ENCODE measurements at regions of chr17 and their contacts with region 1.

Region 1: GRCh38 chr17:32783602-32784001 is 93.3 kb downstream of the MYO1D start:
- DNase-seq: no peak
- H3K4me3 ChIP-seq: no peak overlapping the region
- H3K27ac ChIP-seq: no peak overlapping the region
- H3K4me1 ChIP-seq: no peaks in the 10 kb centered on the region
- H3K27me3 ChIP-seq: no peaks in the 10 kb centered on the region
- CTCF ChIP-seq: peak; percentile 45 to 84 (median 72)
- POLR2A ChIP-seq: no peak

Region 2: DNA sequence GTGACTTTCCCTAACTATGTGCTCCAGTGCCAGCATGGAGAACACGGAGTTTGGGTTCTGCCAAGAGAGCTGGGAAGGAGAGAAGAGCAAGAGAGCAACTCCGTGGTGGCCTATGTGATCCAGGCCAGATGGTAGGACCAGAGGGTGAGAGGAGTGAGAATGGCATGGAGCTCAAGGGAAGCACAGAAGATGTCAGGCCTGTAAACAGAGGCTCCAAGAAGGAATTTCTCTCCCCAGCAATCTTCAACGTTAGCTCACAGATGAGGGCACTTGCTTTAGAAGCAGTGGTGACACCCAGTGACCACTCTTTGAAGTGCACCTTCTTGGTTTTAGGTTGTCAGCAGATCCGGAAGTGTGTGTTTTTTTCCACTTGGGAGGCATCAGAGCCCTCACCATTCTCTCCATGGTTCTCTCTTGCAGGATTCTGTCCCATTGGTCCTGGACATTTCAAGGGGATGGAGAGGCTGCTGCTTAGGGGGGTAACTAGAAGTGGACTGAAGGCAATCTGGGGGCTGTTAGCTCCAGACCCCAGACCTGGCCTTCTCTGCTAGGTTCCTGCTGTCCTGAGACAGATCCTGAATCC is 126.3 kb after region 1 on chr17:
- intact Hi-C with region 1: loop called (anchors 10 kb)
- DNase-seq: no peak
- H3K4me3 ChIP-seq: no peak overlapping the region
- H3K27ac ChIP-seq: peak overlapping the region in 1 of 8 donors; percentile 35
- H3K4me1 ChIP-seq: peaks cover 0 to 17% (median 3%) of the 10 kb centered on the region in 6 donors
- H3K27me3 ChIP-seq: peaks cover 0 to 4% (median 0%) of the 10 kb centered on the region in 7 donors
- CTCF ChIP-seq: peak; percentile 55 to 86 (median 78)
- POLR2A ChIP-seq: no peak

Region 3: DNA sequence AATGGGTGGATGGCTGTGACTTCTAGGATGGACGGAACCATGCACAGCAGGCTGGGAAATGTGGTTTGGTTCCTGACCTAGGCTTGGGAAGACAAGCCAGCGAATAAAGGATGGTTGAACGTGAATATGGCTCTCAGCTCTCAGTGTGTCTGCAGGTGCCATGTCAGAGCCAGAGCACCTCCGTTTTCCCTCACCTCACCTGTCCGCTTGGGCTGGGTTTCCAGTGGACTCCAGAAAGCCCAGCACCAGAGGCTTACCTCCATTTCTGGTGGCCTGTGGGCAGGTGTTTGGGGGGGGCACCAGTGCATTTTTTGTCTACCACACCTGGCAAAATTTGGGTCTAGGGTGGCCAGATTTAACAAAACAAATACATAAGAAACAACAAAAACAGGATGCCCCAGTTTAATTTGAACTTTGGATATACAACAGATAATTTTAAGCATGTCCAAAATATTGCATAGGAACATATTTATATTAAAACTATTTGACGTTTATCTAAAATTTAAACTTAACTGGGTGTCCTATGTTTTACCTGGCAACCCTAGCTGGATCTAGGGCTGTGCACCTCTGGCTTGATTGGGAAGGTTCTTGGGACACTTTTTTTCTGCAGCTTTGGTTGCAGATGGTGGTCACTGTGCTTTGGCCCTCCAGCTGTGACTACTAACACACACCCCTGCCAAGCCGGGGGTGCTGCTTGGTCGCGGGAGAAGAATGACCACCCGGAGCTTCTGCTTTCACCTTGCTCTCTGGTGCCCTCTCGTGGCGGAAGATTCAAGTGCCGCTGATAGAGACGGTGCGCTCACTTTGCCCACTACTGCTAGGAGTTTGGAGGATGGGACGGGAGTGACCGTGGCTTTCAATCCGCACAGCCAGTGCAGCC is 214.4 kb after region 1 on chr17:
- intact Hi-C with region 1: loop called (anchors 10 kb)
- DNase-seq: peak; percentile 88
- H3K4me3 ChIP-seq: peak overlapping the region in 1 of 8 donors; percentile 17
- H3K27ac ChIP-seq: no peak overlapping the region
- H3K4me1 ChIP-seq: peaks cover 0 to 7% (median 6%) of the 10 kb centered on the region in 6 donors
- H3K27me3 ChIP-seq: peaks cover 0 to 26% (median 8%) of the 10 kb centered on the region in 7 donors
- CTCF ChIP-seq: peak; percentile 29 to 89 (median 82)
- POLR2A ChIP-seq: no peak